ENCODE measurements at regions of chr15 and their contacts with region 1.

Region 1: DNA sequence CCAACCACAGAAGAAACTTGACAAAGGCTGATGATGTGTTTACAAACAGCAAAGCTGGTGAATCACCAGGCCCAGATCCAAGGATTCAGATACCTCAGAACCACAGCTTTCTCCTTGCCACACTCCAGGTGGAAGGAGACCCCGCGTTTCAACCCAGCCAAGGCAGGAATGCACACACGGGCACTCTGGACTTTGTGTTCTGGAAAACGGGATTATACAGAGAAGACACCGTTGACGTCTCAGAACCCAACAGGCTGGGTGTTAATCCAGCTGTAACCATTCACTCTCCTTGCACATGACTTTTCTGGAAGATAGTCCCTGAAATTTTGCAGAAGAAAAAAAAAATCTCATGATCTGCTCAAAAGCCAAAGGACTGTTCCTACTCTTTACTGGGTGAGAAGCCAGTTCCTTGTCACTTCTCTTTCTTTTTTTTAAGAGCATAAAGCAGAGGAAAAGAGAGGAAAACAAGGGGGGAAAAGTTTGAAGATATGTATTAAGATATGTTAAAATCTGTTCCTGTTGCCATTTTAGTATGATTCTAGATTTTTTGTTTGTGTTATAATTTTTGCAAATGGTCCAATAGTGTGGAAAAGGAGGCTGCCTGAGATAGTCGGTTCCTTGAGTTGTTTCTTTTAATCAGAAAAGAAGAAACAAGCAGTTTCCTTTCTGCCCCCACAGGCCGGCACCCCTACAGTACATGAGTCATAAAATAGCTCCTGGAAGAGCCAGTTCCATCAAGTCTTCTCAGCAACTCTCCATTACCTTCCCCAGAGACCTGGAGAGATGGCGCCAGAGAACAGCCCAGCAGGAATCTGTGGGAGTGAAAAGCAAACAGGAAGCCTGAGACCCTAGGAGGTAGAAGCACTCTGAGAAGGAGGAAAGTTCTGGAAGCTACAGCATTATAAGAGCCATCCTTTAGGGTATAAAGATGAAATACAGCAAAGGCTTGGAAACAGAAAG is 73.1 kb downstream of the RORA start:
- DNase-seq: peak; percentile 26
- H3K4me3 ChIP-seq: no peak overlapping the region
- H3K27ac ChIP-seq: no peak overlapping the region
- H3K4me1 ChIP-seq: no peaks in the 10 kb centered on the region
- H3K27me3 ChIP-seq: no peaks in the 10 kb centered on the region
- CTCF ChIP-seq: peak in 1 of 2 donors; percentile 19

Region 2: GRCh38 chr15:61253186-61253585 is 97.2 kb after region 1 on chr15:
- CTCF ChIA-PET with region 1: no interaction called
- dilution Hi-C with region 1: loop called (anchors 5 kb)
- in situ Hi-C with region 1: no loop called
- intact Hi-C with region 1: no loop called
- DNase-seq: no peak
- H3K4me3 ChIP-seq: no peak overlapping the region
- H3K27ac ChIP-seq: no peak overlapping the region
- H3K4me1 ChIP-seq: no peaks in the 10 kb centered on the region
- H3K27me3 ChIP-seq: peaks cover 2% of the 10 kb centered on the region
- CTCF ChIP-seq: no peak

Measured in mammary epithelial cell (primary cell).